ENCODE measurements at regions of chr2 and their contacts with region 1.

Region 1: DNA sequence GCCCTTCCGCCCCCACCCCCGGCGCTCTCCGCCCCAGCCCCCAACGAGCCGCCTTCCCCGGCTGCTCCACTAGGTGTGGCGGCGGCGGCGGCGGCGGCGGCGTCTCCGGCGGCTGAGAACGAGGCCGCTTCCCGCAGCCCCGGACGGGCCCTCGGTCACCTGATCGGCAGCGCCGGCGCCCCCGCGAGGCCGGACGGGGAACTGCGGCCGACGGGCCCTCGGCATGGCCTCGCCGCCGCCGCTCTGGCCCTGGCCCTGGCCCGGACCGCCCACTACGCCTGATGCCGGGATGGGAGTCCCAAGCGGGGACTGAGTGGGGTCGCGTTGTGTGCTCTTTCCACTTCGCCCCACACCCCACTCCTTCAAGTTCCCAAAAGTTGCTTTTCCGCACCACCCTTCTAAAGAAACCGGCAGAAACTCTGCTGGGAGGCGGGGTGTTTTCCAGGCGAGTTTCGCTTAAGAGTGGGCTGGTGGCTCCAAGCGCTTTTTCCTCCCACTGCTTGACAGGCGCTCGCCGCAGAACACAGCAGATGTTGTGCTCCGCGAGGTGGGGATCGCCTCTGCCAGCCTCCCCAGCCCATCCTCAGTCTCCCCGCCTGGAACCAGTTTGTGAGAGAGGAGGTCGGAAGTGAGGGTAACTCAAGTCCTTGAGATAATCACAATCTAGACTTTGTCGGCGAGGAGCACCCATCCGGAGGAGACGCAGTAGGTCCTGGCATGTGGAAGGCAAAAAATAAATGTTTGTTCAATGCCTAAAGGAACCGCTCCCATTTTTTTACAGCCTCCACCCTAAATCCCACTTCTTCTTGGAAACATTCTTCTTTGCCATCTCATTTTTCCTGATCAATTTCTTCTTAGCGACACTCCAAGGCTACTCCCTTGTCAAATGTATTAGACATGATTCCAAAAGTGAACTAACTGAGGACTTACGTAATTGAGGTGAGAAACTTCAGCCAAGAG is at the start of gene NCKAP1:
- DNase-seq: peak; percentile 74 to 97 (median 82)

Region 2: DNA sequence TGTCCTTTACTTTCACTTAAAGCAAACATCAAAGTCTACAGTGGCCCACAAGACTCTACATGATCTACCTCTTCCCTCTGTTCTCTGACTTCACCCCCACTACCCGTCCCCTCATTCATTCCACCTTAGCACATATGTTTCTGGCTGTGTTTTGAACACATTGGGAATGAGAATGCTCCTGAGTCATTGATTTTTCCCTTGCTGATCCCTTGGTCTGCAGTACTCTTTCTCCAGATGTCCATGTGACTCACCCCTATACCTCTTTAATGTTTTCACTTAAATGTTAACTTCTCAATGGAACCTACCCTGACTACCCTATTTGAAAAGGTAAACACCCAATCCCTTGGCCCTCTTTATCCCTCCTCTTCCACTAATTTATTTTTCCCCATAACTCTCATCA is 141.5 kb before region 1 on chr2:
- intact Hi-C with region 1: no loop called
- DNase-seq: no peak

Region 3: DNA sequence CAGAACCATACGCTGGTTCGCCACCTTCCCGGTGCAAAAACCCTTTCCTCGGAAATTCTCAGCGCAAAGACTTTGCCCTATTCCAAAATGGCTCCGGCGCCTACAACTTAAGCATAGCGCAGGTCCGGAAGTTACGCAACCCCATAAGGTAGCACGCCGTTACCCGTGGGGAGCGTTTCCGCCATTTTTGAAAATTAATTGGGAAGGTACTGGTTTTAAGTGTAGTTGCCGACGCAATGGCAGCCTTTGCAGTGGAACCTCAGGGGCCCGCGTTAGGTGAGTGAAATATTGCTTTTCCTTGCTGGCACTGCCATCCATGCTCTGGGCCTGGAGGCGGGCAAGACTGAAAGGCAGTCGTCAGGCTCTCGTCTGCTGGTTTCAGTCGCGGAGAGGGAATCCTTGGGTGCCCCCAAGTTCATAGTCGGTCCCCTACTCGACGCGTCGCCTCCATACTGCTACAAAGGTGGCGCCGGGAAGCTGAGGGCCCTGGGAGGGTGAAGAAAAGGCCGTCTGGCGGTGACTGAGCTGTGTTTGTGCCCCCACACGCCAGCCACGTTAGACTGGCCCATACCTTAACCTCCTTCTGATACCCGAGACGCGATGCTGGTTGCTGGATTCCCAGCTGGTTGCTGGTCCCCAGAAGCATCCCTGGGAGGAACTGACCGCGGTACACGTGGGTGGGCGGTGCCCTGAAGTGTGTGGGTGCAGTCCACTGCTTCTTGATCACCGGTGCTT is 85.8 kb after region 1 on chr2 and contains the start of gene NUP35:
- intact Hi-C with region 1: loop called (anchors 10 kb)
- DNase-seq: peak; percentile 79 to 97 (median 89)